ENCODE measurements at regions of chr2 and their contacts with region 1.

Region 1: GRCh38 chr2:108533832-108534583 is at the start of gene LIMS1:
- DNase-seq: peak; percentile 74 to 89
- ATAC-seq: peak; percentile 92 to 98 (median 93)
- H3K4me3 ChIP-seq: peak within 1 kb of the TSS; percentile 69
- H3K4me3 Mint-ChIP-seq: peak within 1 kb of the TSS; percentile 93
- H3K27ac ChIP-seq: peak within 1 kb of the TSS; percentile 36
- H3K27ac Mint-ChIP-seq: peak within 1 kb of the TSS; percentile 60 to 79
- H3K4me1 ChIP-seq: peaks cover 11% of the 10 kb centered on the region
- H3K4me1 Mint-ChIP-seq: peaks cover 13 to 18% of the 10 kb centered on the region in 2 donors
- H3K27me3 ChIP-seq: no peaks in the 10 kb centered on the region
- H3K27me3 Mint-ChIP-seq: no peaks in the 10 kb centered on the region
- CTCF ChIP-seq: no peak
- total RNA-seq, gene LIMS1: 31.6 to 41.4 (median 34.8) TPM

Region 2: GRCh38 chr2:108396845-108397244 is 137.2 kb before region 1 on chr2:
- intact Hi-C with region 1: no loop called
- DNase-seq: peak in 1 of 2 donors; percentile 5
- ATAC-seq: no peak
- H3K4me3 ChIP-seq: no peak overlapping the region
- H3K4me3 Mint-ChIP-seq: no peak overlapping the region
- H3K27ac ChIP-seq: no peak overlapping the region
- H3K27ac Mint-ChIP-seq: no peak overlapping the region
- H3K4me1 ChIP-seq: no peaks in the 10 kb centered on the region
- H3K4me1 Mint-ChIP-seq: no peaks in the 10 kb centered on the region
- H3K27me3 ChIP-seq: no peaks in the 10 kb centered on the region
- H3K27me3 Mint-ChIP-seq: peaks cover 0 to 2% of the 10 kb centered on the region in 2 donors
- CTCF ChIP-seq: no peak

Region 3: GRCh38 chr2:108448678-108449493 is 85.1 kb before region 1 on chr2 and contains the start of gene GCC2:
- intact Hi-C with region 1: loop called (anchors 2 kb)
- DNase-seq: peak; percentile 96 to 98
- ATAC-seq: peak; percentile 95 to 99 (median 97)
- H3K4me3 ChIP-seq: peak within 1 kb of the TSS; percentile 88
- H3K4me3 Mint-ChIP-seq: peak within 1 kb of the TSS; percentile 95
- H3K27ac ChIP-seq: peak within 1 kb of the TSS; percentile 95
- H3K27ac Mint-ChIP-seq: peak within 1 kb of the TSS; percentile 96 to 99
- H3K4me1 ChIP-seq: peaks cover 11% of the 10 kb centered on the region
- H3K4me1 Mint-ChIP-seq: peaks cover 29 to 37% of the 10 kb centered on the region in 2 donors
- H3K27me3 ChIP-seq: no peaks in the 10 kb centered on the region
- H3K27me3 Mint-ChIP-seq: no peaks in the 10 kb centered on the region
- CTCF ChIP-seq: no peak
- total RNA-seq, gene GCC2: 84.8 to 110 (median 89.6) TPM

Region 4: DNA sequence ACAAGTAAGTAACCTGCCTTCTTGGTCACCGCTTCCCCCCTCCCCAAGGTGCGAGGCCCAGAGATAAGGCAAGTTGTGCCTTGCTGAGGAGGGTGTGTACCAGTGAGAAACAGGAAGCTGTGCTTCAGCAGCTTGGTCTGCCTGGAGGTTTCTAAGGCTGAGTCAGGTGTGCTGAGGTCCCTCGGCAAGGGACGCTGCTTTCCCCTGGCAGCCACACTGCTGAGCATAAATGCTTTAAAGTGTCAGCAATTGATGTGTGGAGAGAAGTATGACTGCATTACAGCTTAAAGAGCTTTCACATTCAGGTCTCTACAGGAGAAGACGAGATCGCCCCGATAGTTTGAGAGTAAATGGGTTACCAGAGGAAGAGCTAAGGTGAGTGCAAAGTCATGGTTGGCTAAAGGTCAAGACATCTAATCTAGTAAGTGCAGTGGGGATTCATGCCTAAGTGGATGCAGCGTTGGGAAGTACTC is 87.1 kb after region 1 on chr2:
- intact Hi-C with region 1: loop called (anchors 10 kb)
- DNase-seq: peak; percentile 45 to 88
- ATAC-seq: peak; percentile 95 to 97 (median 95)
- H3K4me3 ChIP-seq: peak overlapping the region; percentile 16
- H3K4me3 Mint-ChIP-seq: peak overlapping the region; percentile 92
- H3K27ac ChIP-seq: peak overlapping the region; percentile 73
- H3K27ac Mint-ChIP-seq: peak overlapping the region; percentile 87 to 96
- H3K4me1 ChIP-seq: peaks cover 22% of the 10 kb centered on the region
- H3K4me1 Mint-ChIP-seq: peaks cover 46 to 48% of the 10 kb centered on the region in 2 donors
- H3K27me3 ChIP-seq: no peaks in the 10 kb centered on the region
- H3K27me3 Mint-ChIP-seq: no peaks in the 10 kb centered on the region
- CTCF ChIP-seq: no peak

Region 5: GRCh38 chr2:109201465-109202327 is 667.7 kb after region 1 on chr2:
- intact Hi-C with region 1: no loop called
- DNase-seq: no peak
- ATAC-seq: no peak
- H3K4me3 ChIP-seq: no peak overlapping the region
- H3K4me3 Mint-ChIP-seq: no peak overlapping the region
- H3K27ac ChIP-seq: no peak overlapping the region
- H3K27ac Mint-ChIP-seq: no peak overlapping the region
- H3K4me1 ChIP-seq: peaks cover 6% of the 10 kb centered on the region
- H3K4me1 Mint-ChIP-seq: peaks cover 21 to 25% of the 10 kb centered on the region in 2 donors
- H3K27me3 ChIP-seq: no peaks in the 10 kb centered on the region
- H3K27me3 Mint-ChIP-seq: peaks cover 11% of the 10 kb centered on the region in 2 donors
- CTCF ChIP-seq: no peak